ENCODE measurements at regions of chr1 and their contacts with region 1.

Region 1: DNA sequence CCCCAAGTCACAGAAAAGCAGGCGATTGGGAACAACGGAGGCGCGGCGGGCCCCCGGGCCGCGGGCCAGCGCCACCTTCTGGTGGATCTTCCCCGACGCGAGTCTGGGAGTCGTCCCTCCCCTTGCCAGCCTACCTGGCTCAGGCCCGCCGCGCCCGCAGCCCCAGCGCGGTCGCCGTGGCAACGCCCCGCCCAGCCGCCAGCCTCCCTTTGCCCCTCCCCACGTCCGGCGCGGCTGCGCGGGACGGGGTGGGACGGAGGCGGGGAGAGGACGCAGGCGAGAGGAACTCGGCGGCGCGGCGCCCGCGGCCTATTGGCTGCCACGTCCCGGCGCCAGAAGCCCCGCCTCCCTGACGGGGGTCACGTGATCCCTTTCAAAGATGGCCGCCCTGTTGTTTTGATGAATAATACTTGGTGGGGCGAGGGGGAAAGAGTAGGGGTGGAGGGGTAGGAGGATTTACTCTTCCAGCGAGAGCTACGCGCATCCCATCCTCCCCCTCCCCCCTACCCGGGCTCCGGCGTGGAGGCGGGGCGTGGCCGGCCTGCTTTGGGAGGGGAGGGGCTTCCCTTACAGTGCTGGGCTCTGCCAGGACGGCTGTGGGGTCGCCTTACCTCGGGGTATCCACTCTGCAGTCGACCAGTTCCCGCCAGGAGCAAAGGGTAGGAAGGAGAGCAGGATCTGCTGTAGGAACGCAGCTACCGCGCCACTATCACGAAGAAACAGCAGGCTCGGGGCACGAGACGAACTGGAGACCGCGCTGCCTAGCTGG is at the start of gene UBE4B:
- DNase-seq: peak; percentile 96 to 100 (median 99)
- ATAC-seq: peak; percentile 94
- H3K4me3 ChIP-seq: peak within 1 kb of the TSS; percentile 95 to 98
- H3K4me3 Mint-ChIP-seq: peak within 1 kb of the TSS; percentile 97
- H3K27ac ChIP-seq: peak within 1 kb of the TSS; percentile 93 to 94
- H3K27ac Mint-ChIP-seq: peak within 1 kb of the TSS; percentile 98
- H3K4me1 ChIP-seq: peaks cover 18% of the 10 kb centered on the region
- H3K4me1 Mint-ChIP-seq: peaks cover 23% of the 10 kb centered on the region
- H3K27me3 ChIP-seq: no peaks in the 10 kb centered on the region
- H3K27me3 Mint-ChIP-seq: no peaks in the 10 kb centered on the region
- CTCF ChIP-seq: peak; percentile 89
- total RNA-seq, gene UBE4B: 25.8 to 32.2 TPM

Region 2: DNA sequence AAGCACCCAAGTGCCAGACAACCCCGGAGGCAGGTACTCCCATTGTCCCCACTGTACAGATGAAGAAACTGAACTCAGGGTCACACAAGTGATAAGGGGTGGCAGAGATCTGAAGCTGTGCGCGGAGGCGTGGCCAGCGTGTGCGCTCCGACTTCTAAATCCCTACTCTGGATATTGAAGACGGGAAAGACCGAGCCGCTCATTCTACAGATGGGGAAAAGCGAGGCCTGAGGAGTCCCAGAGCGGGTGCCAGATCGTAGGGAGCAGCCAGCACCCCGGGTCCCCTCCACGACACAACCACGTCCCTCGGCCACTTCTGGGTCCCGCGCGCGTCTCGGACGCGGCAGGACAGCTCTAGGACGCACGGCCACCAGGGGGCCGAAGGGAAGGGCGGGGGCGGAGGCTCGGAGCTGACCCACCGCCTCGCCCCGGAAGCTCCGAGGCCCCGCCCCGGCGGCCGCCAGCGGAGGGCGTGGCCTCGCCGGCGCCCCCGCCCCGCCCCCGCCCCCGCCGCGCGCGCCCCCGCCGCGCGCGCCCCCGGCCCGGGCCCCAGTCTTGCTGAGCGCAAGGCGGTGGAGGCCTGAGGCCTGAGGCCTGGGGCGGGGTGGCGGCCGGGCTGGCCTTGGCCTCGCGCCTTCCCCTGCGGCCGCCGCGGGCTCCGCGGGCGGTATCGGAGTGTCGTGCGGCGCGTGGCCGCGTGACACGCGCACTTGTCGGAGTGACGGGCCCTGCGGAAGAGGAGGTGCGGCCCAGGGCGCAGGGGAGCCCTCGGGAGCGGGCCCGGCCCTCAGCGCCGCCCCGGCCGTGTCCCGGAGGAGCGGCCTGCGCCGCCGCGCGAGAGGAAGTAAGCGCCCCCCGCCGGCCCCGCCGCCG is 798.3 kb before region 1 on chr1 and contains the start of gene H6PD:
- CTCF ChIA-PET with region 1: no interaction called
- POLR2A ChIA-PET with region 1: no interaction called
- intact Hi-C with region 1: loop called (anchors 10 kb)
- DNase-seq: peak; percentile 43 to 89 (median 71)
- ATAC-seq: peak; percentile 76
- H3K4me3 ChIP-seq: peak within 1 kb of the TSS; percentile 71 to 84
- H3K4me3 Mint-ChIP-seq: peak within 1 kb of the TSS; percentile 96
- H3K27ac ChIP-seq: peak within 1 kb of the TSS; percentile 64 to 84
- H3K27ac Mint-ChIP-seq: peak within 1 kb of the TSS; percentile 96
- H3K4me1 ChIP-seq: peaks cover 26% of the 10 kb centered on the region
- H3K4me1 Mint-ChIP-seq: peaks cover 38% of the 10 kb centered on the region
- H3K27me3 ChIP-seq: no peaks in the 10 kb centered on the region
- H3K27me3 Mint-ChIP-seq: no peaks in the 10 kb centered on the region
- CTCF ChIP-seq: peak; percentile 22
- total RNA-seq, gene H6PD: 11.1 to 11.2 TPM

Region 3: GRCh38 chr1:9717193-9718005 is 315.4 kb before region 1 on chr1:
- CTCF ChIA-PET with region 1: no interaction called
- POLR2A ChIA-PET with region 1: no interaction called
- intact Hi-C with region 1: loop called in 1 of 2 experiments (anchors 10 kb)
- DNase-seq: peak; percentile 82 to 96 (median 91)
- ATAC-seq: peak; percentile 70
- H3K4me3 ChIP-seq: peak overlapping the region; percentile 74 to 76
- H3K4me3 Mint-ChIP-seq: peak overlapping the region; percentile 91
- H3K27ac ChIP-seq: peak overlapping the region; percentile 81
- H3K27ac Mint-ChIP-seq: peak overlapping the region; percentile 92
- H3K4me1 ChIP-seq: peaks cover 90% of the 10 kb centered on the region
- H3K4me1 Mint-ChIP-seq: peaks cover 75% of the 10 kb centered on the region
- H3K27me3 ChIP-seq: no peaks in the 10 kb centered on the region
- H3K27me3 Mint-ChIP-seq: no peaks in the 10 kb centered on the region
- CTCF ChIP-seq: no peak

Region 4: DNA sequence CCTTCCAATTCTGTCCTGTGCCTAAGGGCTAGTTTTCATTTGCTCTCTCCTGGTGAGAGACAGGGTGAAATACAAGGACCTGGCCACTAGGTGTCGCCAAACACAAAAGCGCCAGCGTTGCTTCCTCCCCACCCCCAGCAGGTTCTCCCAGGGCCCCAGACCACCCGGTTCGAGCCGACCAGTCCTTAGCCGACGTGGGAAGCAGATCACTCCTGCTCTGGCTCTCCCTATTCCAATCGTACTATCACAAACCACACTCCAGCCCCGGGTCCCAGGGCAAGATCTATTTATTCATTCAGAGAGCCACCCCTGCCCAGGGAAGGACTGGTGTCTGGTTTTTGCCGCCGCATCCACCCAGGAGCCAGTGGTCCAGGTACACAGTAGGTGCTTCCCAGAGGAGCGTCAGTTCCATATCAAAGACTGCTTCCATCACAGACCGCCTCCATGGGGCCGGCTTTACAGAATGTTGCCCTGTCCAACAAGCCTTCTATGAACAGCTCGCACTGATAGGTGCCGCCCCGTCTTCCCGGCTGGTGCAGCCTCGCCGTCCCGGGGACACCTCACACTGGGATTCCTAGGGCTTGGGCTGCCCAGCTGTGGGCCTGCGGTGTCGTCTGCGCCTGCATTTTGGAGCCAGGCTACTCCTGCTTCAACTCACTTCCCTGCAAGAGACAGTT is 157.7 kb before region 1 on chr1:
- CTCF ChIA-PET with region 1: interaction called, 4 read pairs
- POLR2A ChIA-PET with region 1: no interaction called
- intact Hi-C with region 1: loop called in 1 of 2 experiments (anchors 1 kb)
- DNase-seq: peak; percentile 49 to 85 (median 76)
- ATAC-seq: peak; percentile 99
- H3K4me3 ChIP-seq: no peak overlapping the region
- H3K4me3 Mint-ChIP-seq: peak overlapping the region; percentile 26
- H3K27ac ChIP-seq: no peak overlapping the region
- H3K27ac Mint-ChIP-seq: no peak overlapping the region
- H3K4me1 ChIP-seq: no peaks in the 10 kb centered on the region
- H3K4me1 Mint-ChIP-seq: peaks cover 4% of the 10 kb centered on the region
- H3K27me3 ChIP-seq: no peaks in the 10 kb centered on the region
- H3K27me3 Mint-ChIP-seq: no peaks in the 10 kb centered on the region
- CTCF ChIP-seq: peak; percentile 83

Region 5: DNA sequence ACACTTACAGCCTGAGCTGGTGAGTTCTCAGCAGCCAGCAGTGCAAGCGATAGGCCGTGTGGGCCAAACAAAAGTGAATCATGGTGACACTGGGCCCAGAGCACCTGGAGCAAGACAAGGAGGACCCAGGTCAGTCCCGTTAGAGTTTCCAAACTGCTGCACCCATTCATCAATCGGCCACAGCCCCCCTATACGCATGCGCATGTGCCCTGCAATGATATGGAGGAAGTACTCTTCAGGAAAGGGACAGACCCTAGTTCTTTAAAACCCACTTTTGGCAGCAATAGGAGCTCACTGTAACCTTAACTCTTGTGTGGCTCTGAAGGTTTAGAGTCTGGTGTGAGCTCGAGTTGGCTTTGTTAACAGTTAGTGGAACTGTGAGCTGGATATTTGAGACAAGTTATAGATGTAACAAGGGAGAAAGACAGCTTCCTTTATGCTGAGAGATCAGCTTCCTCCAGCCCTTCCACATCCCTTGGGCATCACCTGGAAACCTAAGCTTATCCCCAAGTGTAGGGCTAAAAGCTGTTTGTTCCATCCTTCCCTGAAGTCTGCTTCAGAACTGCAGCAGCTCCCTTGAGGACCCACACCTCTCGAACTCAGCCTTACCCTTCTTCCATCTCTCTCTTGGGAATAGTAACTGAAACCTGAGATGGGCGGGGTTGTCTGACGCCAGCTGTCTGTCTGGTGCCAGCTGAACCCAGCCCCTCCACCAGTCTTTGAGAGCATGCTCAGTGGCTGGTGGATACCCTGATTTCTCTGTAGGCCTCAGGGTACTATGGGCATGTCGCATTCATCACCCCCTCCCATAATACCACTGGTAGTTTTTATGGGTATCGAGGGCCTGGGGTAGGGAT is 71.8 kb before region 1 on chr1:
- CTCF ChIA-PET with region 1: no interaction called
- POLR2A ChIA-PET with region 1: no interaction called
- intact Hi-C with region 1: no loop called
- DNase-seq: no peak
- ATAC-seq: no peak
- H3K4me3 ChIP-seq: no peak overlapping the region
- H3K4me3 Mint-ChIP-seq: no peak overlapping the region
- H3K27ac ChIP-seq: no peak overlapping the region
- H3K27ac Mint-ChIP-seq: no peak overlapping the region
- H3K4me1 ChIP-seq: no peaks in the 10 kb centered on the region
- H3K4me1 Mint-ChIP-seq: no peaks in the 10 kb centered on the region
- H3K27me3 ChIP-seq: no peaks in the 10 kb centered on the region
- H3K27me3 Mint-ChIP-seq: no peaks in the 10 kb centered on the region
- CTCF ChIP-seq: no peak

Region 6: DNA sequence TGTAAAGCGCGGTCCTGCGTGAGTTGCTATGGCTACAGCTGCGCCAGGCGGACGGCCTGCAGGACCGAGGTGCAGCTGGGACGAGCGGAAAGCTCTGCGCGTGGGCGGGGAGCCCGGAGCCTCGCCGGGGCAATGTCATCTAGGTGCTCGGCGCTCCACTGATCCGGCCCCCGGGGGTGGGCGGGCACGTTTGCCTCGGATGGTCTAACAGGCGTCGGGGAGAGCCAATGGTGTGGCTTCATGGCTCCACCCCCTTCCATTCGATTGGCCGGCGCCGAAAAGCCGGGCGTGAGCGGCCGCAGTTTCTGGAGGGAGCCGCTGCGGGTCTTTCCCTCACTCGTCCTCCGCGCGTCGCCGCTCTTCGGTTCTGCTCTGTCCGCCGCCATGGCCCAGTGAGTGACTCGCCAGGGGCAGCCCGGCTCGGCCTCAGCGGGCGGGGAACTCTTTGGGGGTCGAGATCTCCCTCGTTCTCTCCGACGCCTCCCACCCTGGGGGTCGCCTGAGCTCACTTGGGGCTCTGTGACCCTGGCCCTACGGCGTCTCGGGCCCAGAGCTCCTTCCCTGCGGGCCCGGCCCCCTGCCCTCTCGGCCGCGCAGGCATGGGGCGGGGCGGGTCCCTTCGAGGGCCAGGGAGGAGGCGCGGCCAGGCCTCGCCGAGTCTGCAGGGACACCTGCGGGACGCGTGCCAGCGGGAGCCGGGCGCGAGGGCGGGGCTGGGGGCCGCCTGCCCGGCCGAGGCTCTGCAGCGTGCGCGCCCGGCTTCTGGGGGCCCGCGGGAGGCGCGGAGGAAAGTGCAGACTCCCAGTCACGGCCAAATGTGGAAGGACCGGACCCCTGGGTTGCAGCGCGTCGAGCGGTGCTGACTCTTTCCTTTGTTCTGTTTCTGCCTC is 366.2 kb after region 1 on chr1 and contains the start of gene PGD:
- CTCF ChIA-PET with region 1: interaction called, 4 read pairs
- POLR2A ChIA-PET with region 1: no interaction called
- intact Hi-C with region 1: loop called (anchors 1 to 2 kb)
- DNase-seq: peak; percentile 91 to 98 (median 97)
- ATAC-seq: peak; percentile 97
- H3K4me3 ChIP-seq: peak within 1 kb of the TSS; percentile 86 to 97
- H3K4me3 Mint-ChIP-seq: peak within 1 kb of the TSS; percentile 97
- H3K27ac ChIP-seq: peak within 1 kb of the TSS; percentile 57 to 67
- H3K27ac Mint-ChIP-seq: peak within 1 kb of the TSS; percentile 77
- H3K4me1 ChIP-seq: peaks cover 16% of the 10 kb centered on the region
- H3K4me1 Mint-ChIP-seq: peaks cover 22% of the 10 kb centered on the region
- H3K27me3 ChIP-seq: no peaks in the 10 kb centered on the region
- H3K27me3 Mint-ChIP-seq: no peaks in the 10 kb centered on the region
- CTCF ChIP-seq: no peak
- total RNA-seq, gene PGD: 20.2 to 21.7 TPM

Region 7: DNA sequence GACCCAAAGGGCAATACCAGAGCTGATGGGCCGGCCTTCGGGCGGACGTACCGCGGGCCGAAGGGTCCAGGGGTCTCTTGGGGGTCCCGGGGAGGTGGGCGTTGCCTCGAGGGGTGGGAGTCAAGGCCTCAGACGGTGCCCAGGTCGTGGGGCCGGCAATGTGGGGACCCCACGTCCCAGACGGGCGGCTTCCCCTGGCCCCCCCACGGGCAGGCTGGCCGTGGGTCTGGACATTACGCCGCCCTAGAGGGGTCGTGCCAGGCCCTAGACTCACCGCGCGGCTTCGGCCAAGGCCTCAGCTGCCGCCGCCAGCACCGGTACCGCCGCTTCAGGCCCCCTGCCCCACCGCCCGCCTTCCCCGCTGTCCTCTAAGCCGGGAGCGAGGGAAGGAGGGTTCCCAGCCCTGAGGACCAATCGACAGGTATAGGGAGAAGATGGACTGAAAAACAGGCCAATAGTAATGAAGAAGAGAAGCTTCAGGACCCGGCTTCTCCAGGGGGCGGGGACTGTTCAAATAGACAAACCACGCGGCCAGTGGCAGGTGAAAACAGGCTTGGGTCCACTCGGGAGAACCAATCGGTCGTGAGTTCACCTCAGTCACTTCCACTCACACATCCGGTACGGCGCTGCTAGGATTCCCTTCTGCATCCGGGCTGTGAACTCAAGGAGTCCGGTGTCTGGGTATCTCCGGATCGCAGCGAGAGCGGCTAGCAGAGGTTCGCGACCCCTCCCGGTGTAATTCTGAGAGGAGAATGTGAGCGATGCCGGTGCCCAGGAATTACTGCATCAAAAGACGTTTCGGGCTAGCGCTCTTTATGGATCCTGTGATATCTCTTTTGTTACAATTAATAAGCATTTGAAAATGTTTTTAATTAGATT is 1229.6 kb after region 1 on chr1 and contains the start of gene MTOR:
- CTCF ChIA-PET with region 1: no interaction called
- POLR2A ChIA-PET with region 1: no interaction called
- intact Hi-C with region 1: loop called in 1 of 2 experiments (anchors 5 kb)
- DNase-seq: peak; percentile 92 to 100 (median 96)
- ATAC-seq: peak; percentile 97
- H3K4me3 ChIP-seq: peak within 1 kb of the TSS; percentile 85 to 90
- H3K4me3 Mint-ChIP-seq: peak within 1 kb of the TSS; percentile 81
- H3K27ac ChIP-seq: peak within 1 kb of the TSS; percentile 61 to 81
- H3K27ac Mint-ChIP-seq: peak within 1 kb of the TSS; percentile 89
- H3K4me1 ChIP-seq: peaks cover 12% of the 10 kb centered on the region
- H3K4me1 Mint-ChIP-seq: peaks cover 20% of the 10 kb centered on the region
- H3K27me3 ChIP-seq: no peaks in the 10 kb centered on the region
- H3K27me3 Mint-ChIP-seq: no peaks in the 10 kb centered on the region
- CTCF ChIP-seq: no peak
- total RNA-seq, gene MTOR: 24.7 to 25.1 TPM

Measured in CD8-positive, alpha-beta T cell (primary cell).